Transverse colon (tissue), 4 donors: ENCODE measurements at regions of chr4 and their contacts with region 1.

Region 1: GRCh38 chr4:181138116-181138515 is 1105.1 kb upstream of the TENM3 start:
- DNase-seq: no peak
- H3K4me3 ChIP-seq: no peak overlapping the region
- H3K27ac ChIP-seq: no peak overlapping the region
- H3K4me1 ChIP-seq: no peaks in the 10 kb centered on the region
- H3K27me3 ChIP-seq: peaks cover 4% of the 10 kb centered on the region
- CTCF ChIP-seq: no peak
- EP300 ChIP-seq: no peak
- POLR2A ChIP-seq: no peak

Region 2: GRCh38 chr4:179605196-179605595 is 1532.9 kb before region 1 on chr4:
- in situ Hi-C with region 1: no loop called
- intact Hi-C with region 1: loop called (anchors 5 kb)
- DNase-seq: no peak
- H3K4me3 ChIP-seq: no peak overlapping the region
- H3K27ac ChIP-seq: no peak overlapping the region
- H3K4me1 ChIP-seq: no peaks in the 10 kb centered on the region
- H3K27me3 ChIP-seq: no peaks in the 10 kb centered on the region
- CTCF ChIP-seq: no peak
- EP300 ChIP-seq: no peak
- POLR2A ChIP-seq: no peak

Region 3: GRCh38 chr4:182885738-182886077 is 1747.6 kb after region 1 on chr4:
- in situ Hi-C with region 1: no loop called
- intact Hi-C with region 1: no loop called
- DNase-seq: no peak
- H3K4me3 ChIP-seq: no peak overlapping the region
- H3K27ac ChIP-seq: no peak overlapping the region
- H3K4me1 ChIP-seq: no peaks in the 10 kb centered on the region
- H3K27me3 ChIP-seq: no peaks in the 10 kb centered on the region
- CTCF ChIP-seq: no peak
- EP300 ChIP-seq: no peak
- POLR2A ChIP-seq: no peak